Panc1 (cell line): ENCODE measurements at regions of chr10 and their contacts with region 1.

Region 1: GRCh38 chr10:116444527-116445142 is 17.0 kb downstream of the PNLIPRP3 start:
- DNase-seq: peak; percentile 5
- ATAC-seq: peak; percentile 86
- H3K4me3 ChIP-seq: no peak overlapping the region
- H3K27ac ChIP-seq: no peak overlapping the region
- H3K4me1 ChIP-seq: no peaks in the 10 kb centered on the region
- H3K27me3 ChIP-seq: peaks cover 5% of the 10 kb centered on the region; the same call in 1 of the 2 replicates
- CTCF ChIP-seq: peak; percentile 94

Region 2: DNA sequence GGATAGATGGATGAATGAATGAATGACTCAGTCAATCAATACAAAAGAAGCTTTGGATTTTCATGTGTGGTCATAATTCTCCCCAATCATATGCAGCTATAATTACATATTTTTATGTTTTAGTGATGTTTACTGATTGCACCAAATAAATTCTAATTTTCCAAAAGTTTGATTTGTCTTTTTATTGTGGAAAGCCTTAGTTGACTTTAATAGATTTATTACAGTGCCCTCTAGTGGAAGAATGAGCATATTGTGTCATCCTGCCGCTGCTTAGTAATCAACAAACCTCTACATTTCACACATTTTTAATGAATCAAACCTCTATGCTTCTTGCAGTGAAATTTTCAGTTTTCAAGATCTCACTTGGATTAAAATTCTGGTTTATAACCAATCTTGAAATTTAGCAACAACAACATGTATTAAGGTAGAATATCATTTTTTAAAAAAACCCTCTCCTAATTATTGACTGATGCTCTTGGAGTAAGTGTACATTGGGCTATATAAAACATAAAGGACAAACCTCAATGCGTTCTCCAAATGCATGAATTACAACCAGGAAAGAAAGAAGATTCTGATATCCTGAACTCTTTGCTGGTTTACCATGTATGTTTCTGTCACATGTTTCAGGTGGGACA is 45.5 kb after region 1 on chr10:
- CTCF ChIA-PET with region 1: interaction called, 3 read pairs
- POLR2A ChIA-PET with region 1: no interaction called
- in situ Hi-C with region 1: no loop called
- intact Hi-C with region 1: loop called (anchors 2 kb)
- DNase-seq: peak; percentile 15
- ATAC-seq: peak; percentile 80
- H3K4me3 ChIP-seq: no peak overlapping the region
- H3K27ac ChIP-seq: no peak overlapping the region
- H3K4me1 ChIP-seq: no peaks in the 10 kb centered on the region
- H3K27me3 ChIP-seq: peaks cover 13% of the 10 kb centered on the region
- CTCF ChIP-seq: peak; percentile 79; the same call in 1 of the 2 replicates

Region 3: DNA sequence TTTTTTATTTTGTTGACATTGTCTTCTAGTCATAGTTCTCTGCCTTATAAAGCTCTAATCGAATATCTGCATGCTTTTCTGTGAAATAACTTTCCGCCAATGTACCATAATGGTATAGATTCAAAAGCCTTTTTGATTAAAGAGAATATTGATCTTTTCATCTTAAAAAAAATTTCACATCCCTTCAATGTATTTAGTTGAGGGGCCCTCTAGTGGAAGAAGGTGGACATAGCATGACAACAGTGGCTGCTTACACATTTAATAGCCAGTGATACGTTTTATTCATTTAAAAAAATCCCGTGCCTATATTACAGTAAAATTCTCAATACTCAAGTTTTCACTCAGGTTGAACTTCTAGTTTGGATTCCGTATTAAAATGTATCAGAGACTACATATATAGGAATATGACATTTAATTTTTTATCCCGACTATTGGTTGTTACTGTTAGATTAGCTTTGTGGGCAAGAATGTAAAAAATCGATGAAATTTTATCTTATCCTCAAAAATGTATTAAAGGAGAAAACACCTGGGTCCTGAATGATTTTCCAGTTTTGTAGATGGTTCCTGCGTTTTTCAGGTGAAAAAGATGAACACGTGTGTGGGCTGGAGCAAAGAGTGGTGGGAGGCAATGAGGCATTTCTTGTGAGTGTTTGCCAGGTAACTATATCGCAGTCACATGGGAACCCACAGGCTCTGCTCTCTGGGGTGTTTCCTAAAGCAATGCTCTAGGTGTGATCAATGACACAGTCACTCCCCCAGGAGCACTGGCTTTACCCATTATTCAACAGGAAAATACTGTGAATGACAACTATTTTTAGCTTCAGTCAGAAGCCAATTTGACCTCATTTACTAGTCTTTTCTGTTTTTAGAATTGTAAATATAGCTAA is 77.0 kb after region 1 on chr10:
- CTCF ChIA-PET with region 1: no interaction called
- POLR2A ChIA-PET with region 1: no interaction called
- in situ Hi-C with region 1: no loop called
- intact Hi-C with region 1: loop called (anchors 2 kb)
- DNase-seq: peak; percentile 7
- ATAC-seq: no peak
- H3K4me3 ChIP-seq: no peak overlapping the region
- H3K27ac ChIP-seq: no peak overlapping the region
- H3K4me1 ChIP-seq: no peaks in the 10 kb centered on the region
- H3K27me3 ChIP-seq: peaks cover 26% of the 10 kb centered on the region
- CTCF ChIP-seq: peak; percentile 90; the same call in 1 of the 2 replicates

Region 4: DNA sequence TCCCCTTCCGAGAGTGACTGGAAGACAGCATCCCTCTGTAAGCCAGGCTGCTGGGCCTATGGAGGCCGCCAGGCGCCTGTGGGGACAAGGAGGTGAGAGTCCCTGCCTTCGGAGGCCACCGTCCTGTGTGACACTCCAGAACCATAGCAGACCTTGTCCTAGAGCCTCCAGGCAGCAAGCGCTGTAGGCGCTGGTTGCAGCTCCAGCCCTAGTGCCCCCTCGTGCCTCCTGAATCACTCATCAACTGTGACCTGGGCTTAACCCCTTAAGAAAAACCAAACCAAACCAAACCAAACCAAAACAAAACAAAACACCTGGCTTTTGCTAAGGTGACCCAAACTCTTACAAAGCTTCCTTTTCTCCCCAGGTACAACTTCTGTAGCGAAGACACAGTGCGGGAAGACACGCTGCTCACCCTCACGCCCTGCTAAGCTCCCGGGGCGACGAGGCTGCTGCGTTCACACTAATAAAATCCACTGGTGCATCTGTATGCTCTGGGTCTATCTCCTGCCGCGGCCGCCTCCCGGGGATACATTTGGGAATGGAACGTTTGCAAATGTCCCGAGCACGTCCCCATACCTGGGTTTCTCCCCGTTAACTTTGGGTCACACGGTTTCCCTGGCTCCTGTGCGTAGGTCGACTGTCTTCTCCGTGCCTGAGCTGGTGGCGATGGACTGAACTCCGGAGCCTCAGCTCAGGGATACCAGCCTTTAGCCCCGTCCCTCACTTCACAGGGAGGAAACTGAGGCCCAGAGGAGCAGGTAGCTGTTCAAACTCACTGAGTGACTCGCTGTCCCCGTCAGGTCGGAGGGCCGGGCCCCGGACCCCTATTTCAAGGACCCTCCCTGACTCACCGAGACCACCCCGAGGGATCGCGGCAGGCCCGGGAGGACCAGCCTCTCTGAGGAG is 164.3 kb after region 1 on chr10:
- CTCF ChIA-PET with region 1: interaction called, 12 read pairs
- POLR2A ChIA-PET with region 1: no interaction called
- in situ Hi-C with region 1: no loop called
- intact Hi-C with region 1: no loop called
- DNase-seq: no peak
- ATAC-seq: 0 out of 2 replicates have a peak, but pooled peaks have one; percentile 26
- H3K4me3 ChIP-seq: no peak overlapping the region
- H3K27ac ChIP-seq: no peak overlapping the region
- H3K4me1 ChIP-seq: no peaks in the 10 kb centered on the region
- H3K27me3 ChIP-seq: no peaks in the 10 kb centered on the region
- CTCF ChIP-seq: no peak